ENCODE measurements at regions of chr16 and their contacts with region 1.

Region 1: GRCh38 chr16:87240220-87241107 is 76.7 kb downstream of the C16orf95 start:
- DNase-seq: peak; percentile 56
- H3K4me3 Mint-ChIP-seq: peak overlapping the region; percentile 21
- H3K27ac Mint-ChIP-seq: peak overlapping the region; percentile 24
- H3K4me1 Mint-ChIP-seq: peaks cover 19% of the 10 kb centered on the region
- H3K27me3 Mint-ChIP-seq: no peaks in the 10 kb centered on the region
- CTCF ChIP-seq: no peak

Region 2: DNA sequence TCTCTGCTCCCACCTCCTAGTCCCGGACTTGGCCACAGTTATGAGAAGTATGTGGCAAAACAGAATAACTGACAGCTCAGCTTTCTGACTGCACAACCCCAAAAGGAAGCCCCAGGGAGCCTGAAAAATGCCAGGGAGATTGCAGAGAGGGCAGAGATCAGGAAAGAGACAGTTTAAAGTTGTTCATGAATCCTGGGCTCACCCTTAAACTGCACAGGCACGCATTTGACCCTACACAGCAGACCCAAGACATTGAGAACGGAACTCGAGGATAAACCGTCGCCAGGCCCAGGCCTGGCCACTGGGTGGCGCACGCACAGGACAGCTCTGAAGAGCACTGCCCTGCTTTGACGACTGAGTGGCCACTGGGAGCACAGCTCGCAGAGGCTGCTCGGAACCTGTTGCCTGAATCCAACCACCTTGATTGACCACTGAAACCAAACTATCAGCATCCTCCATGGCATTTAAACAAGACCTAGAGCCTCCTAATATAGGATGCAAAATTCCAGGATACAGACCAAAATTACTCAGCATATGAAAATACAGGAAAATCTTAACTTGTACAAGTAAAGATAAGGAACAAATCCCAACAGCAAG is 37.3 kb before region 1 on chr16:
- CTCF ChIA-PET with region 1: no interaction called
- POLR2A ChIA-PET with region 1: interaction called, 16 read pairs
- intact Hi-C with region 1: no loop called
- DNase-seq: peak; percentile 79
- H3K4me3 Mint-ChIP-seq: no peak overlapping the region
- H3K27ac Mint-ChIP-seq: no peak overlapping the region
- H3K4me1 Mint-ChIP-seq: peaks cover 39% of the 10 kb centered on the region
- H3K27me3 Mint-ChIP-seq: no peaks in the 10 kb centered on the region
- CTCF ChIP-seq: peak; percentile 82

Region 3: GRCh38 chr16:87210907-87211306 is 29.6 kb before region 1 on chr16:
- CTCF ChIA-PET with region 1: no interaction called
- POLR2A ChIA-PET with region 1: interaction called, 16 read pairs
- intact Hi-C with region 1: loop called (anchors 1 kb)
- DNase-seq: peak; percentile 58
- H3K4me3 Mint-ChIP-seq: no peak overlapping the region
- H3K27ac Mint-ChIP-seq: no peak overlapping the region
- H3K4me1 Mint-ChIP-seq: peaks cover 22% of the 10 kb centered on the region
- H3K27me3 Mint-ChIP-seq: no peaks in the 10 kb centered on the region
- CTCF ChIP-seq: no peak

Region 4: GRCh38 chr16:87375426-87376135 is 135.1 kb after region 1 on chr16:
- CTCF ChIA-PET with region 1: no interaction called
- POLR2A ChIA-PET with region 1: no interaction called
- intact Hi-C with region 1: no loop called
- DNase-seq: peak; percentile 63
- H3K4me3 Mint-ChIP-seq: peak overlapping the region; percentile 62
- H3K27ac Mint-ChIP-seq: peak overlapping the region; percentile 99
- H3K4me1 Mint-ChIP-seq: peaks cover 8% of the 10 kb centered on the region
- H3K27me3 Mint-ChIP-seq: no peaks in the 10 kb centered on the region
- CTCF ChIP-seq: no peak

Measured in MCF 10A (cell line).